ENCODE measurements at regions of chr18 and their contacts with region 1.

Region 1: DNA sequence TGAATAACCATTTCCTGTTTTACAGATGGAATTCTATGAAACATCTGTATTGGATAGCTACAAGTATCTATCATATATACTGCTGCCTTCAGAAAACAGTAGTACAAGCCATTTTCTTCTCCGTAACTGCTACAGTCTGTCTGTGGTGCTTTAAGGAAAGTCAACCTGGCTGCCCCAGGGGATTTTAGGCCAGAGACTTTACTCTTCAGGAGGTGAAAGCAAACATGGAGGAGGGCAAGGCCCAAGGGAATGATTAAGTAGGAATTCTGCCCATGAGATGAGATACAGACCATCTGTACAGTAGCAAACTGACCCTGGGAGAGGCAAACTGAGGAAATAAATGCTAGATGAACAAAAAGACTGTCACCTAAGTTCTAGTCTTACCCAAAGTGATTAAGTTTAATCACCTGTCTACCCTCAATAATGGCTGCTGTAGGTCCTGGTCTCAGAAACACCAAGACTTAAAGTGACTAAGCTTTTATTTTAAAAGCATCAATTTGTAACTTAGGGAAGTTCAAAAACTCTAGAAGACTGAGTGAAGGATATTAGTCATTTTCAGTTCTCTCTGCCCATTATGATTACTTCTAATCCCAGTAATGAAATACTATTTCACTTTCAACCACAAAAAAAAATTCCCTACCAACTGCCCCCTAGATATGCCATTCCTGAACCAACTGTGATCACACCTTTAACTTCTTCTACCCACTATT is 14.8 kb downstream of the MBD2 start:
- DNase-seq: no peak
- H3K4me3 Mint-ChIP-seq: peak overlapping the region; percentile 50
- H3K27ac Mint-ChIP-seq: peak overlapping the region; percentile 88
- H3K4me1 Mint-ChIP-seq: peaks cover 54% of the 10 kb centered on the region
- H3K27me3 Mint-ChIP-seq: no peaks in the 10 kb centered on the region

Region 2: DNA sequence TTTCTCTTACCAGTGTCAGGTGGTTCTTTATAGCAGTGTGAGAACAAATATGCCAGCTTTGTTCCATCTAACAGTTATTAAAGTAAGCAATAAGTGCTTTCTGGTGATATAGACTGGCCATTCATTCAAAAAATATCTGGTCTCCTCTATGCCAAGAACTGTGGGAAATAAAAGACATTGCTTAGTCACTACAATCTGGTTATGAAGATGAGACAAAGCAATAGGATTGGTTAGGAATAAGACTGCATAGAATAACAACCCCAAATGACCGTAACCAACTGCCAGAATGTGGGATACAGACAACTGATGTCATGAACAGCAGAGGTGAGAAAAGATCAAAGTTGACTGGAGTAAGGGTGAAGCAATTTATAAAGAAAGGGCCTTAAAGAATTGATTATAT is 69.0 kb before region 1 on chr18:
- CTCF ChIA-PET with region 1: no interaction called
- intact Hi-C with region 1: no loop called
- DNase-seq: no peak
- H3K4me3 Mint-ChIP-seq: no peak overlapping the region
- H3K27ac Mint-ChIP-seq: no peak overlapping the region
- H3K4me1 Mint-ChIP-seq: peaks cover 13% of the 10 kb centered on the region
- H3K27me3 Mint-ChIP-seq: no peaks in the 10 kb centered on the region

Region 3: GRCh38 chr18:54181856-54182602 is 27.6 kb before region 1 on chr18:
- CTCF ChIA-PET with region 1: interaction called, 3 read pairs
- intact Hi-C with region 1: loop called (anchors 1 kb)
- DNase-seq: peak; percentile 20
- H3K4me3 Mint-ChIP-seq: no peak overlapping the region
- H3K27ac Mint-ChIP-seq: no peak overlapping the region
- H3K4me1 Mint-ChIP-seq: peaks cover 9% of the 10 kb centered on the region
- H3K27me3 Mint-ChIP-seq: no peaks in the 10 kb centered on the region